CD4-positive, alpha-beta memory T cell (primary cell): ENCODE measurements at regions of chr10 and their contacts with region 1.

Region 1: GRCh38 chr10:93376372-93377293 is 105.5 kb downstream of the MYOF start:
- DNase-seq: peak; percentile 62 to 75 (median 69)
- H3K4me3 ChIP-seq: no peak overlapping the region
- H3K4me3 Mint-ChIP-seq: no peak overlapping the region
- H3K27ac ChIP-seq: no peak overlapping the region
- H3K27ac Mint-ChIP-seq: peak overlapping the region in 1 of 7 donors; percentile 38
- H3K4me1 ChIP-seq: peaks cover 11% of the 10 kb centered on the region
- H3K4me1 Mint-ChIP-seq: peaks cover 9 to 18% (median 9%) of the 10 kb centered on the region in 4 donors
- H3K27me3 ChIP-seq: no peaks in the 10 kb centered on the region
- H3K27me3 Mint-ChIP-seq: peaks cover 0 to 1% of the 10 kb centered on the region in 2 donors

Region 2: DNA sequence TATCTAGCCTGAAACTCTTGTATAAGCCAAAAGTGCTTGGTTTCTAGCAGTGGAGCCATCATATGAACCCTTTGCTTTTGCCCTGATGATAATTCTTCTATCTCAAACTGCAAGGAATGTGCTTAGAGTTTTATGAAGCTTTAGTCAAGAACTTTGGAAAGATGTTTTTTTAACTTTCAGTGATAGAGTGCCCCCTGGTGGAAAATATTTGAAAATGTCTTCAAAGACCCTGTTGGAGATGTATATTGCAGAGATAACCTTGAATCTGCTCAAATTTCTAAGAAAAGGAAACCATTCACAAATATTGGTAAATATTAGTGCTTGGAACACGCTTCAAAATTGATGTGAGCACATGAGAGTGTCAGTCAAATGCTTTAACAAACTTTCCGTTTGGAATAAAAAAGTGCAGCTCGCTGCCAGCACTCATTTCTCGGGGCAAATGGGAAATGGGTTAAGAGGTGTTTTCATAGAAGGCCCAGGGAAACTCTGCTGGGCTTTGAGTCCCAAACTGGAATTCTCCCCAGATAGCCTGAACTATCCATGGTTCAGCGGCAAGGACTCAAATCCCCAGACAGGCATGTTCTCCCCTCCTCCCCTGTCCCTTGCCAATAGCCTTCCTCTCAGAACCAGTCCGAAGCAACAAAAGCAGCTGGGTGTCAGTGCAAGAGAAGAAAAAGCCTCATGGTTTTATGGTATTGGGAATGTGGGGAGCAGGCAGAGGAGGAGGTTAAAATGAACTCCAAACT is 23.8 kb before region 1 on chr10:
- CTCF ChIA-PET with region 1: interaction called, 18 read pairs
- POLR2A ChIA-PET with region 1: no interaction called
- intact Hi-C with region 1: no loop called
- DNase-seq: peak in 4 of 5 donors; percentile 43 to 46 (median 45)
- H3K4me3 ChIP-seq: no peak overlapping the region
- H3K4me3 Mint-ChIP-seq: no peak overlapping the region
- H3K27ac ChIP-seq: no peak overlapping the region
- H3K27ac Mint-ChIP-seq: no peak overlapping the region
- H3K4me1 ChIP-seq: no peaks in the 10 kb centered on the region
- H3K4me1 Mint-ChIP-seq: peaks cover 0 to 3% (median 0%) of the 10 kb centered on the region in 4 donors
- H3K27me3 ChIP-seq: no peaks in the 10 kb centered on the region
- H3K27me3 Mint-ChIP-seq: peaks cover 7 to 10% of the 10 kb centered on the region in 2 donors

Region 3: GRCh38 chr10:93386631-93387369 is 10.2 kb after region 1 on chr10:
- CTCF ChIA-PET with region 1: interaction called, 37 read pairs
- POLR2A ChIA-PET with region 1: no interaction called
- intact Hi-C with region 1: no loop called
- DNase-seq: peak in 3 of 5 donors; percentile 13 to 27 (median 16)
- H3K4me3 ChIP-seq: no peak overlapping the region
- H3K4me3 Mint-ChIP-seq: peak overlapping the region; percentile 15 to 71 (median 63)
- H3K27ac ChIP-seq: no peak overlapping the region
- H3K27ac Mint-ChIP-seq: peak overlapping the region; percentile 6 to 87 (median 50)
- H3K4me1 ChIP-seq: peaks cover 17% of the 10 kb centered on the region
- H3K4me1 Mint-ChIP-seq: peaks cover 14 to 30% (median 17%) of the 10 kb centered on the region in 4 donors
- H3K27me3 ChIP-seq: no peaks in the 10 kb centered on the region
- H3K27me3 Mint-ChIP-seq: peaks cover 1 to 2% of the 10 kb centered on the region in 2 donors

Region 4: DNA sequence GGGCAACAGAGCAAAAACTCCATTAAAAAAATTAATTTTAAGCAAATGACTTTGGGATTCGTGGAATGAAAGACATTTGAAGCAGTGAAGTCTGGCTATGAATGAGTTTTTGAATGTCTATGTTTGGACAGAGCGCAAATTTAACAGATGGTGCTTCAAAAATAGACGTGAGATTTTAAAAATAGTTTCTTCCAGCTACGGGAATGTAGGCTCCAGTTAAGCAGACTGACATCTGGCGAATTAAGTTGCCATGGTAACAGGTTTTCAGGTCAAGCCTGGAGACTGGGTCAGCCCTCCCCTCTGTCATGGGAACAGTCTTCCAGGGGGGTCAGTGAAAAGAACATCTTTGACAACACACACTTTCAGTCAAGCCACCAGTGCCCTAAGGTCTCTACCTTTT is 43.5 kb after region 1 on chr10:
- CTCF ChIA-PET with region 1: interaction called, 70 read pairs
- POLR2A ChIA-PET with region 1: no interaction called
- intact Hi-C with region 1: no loop called
- DNase-seq: no peak
- H3K4me3 ChIP-seq: no peak overlapping the region
- H3K4me3 Mint-ChIP-seq: no peak overlapping the region
- H3K27ac ChIP-seq: no peak overlapping the region
- H3K27ac Mint-ChIP-seq: no peak overlapping the region
- H3K4me1 ChIP-seq: peaks cover 3% of the 10 kb centered on the region
- H3K4me1 Mint-ChIP-seq: peaks cover 10 to 18% (median 11%) of the 10 kb centered on the region in 4 donors
- H3K27me3 ChIP-seq: no peaks in the 10 kb centered on the region
- H3K27me3 Mint-ChIP-seq: no peaks in the 10 kb centered on the region

Region 5: DNA sequence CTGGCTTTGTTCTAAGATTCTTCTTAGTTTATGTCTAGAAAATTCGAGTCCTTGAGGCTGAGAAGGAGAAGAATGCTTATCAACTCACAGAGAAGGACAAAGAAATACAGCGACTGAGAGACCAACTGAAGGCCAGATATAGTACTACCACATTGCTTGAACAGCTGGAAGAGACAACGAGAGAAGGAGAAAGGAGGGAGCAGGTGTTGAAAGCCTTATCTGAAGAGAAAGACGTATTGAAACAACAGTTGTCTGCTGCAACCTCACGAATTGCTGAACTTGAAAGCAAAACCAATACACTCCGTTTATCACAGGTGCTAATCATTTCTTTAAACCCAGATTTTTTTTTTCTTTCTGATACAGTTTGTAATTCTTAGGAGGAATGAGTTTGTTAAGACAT is 126.4 kb after region 1 on chr10:
- CTCF ChIA-PET with region 1: interaction called, 210 read pairs
- POLR2A ChIA-PET with region 1: interaction called, 3 read pairs
- intact Hi-C with region 1: no loop called
- DNase-seq: peak in 1 of 5 donors; percentile 7
- H3K4me3 ChIP-seq: peak overlapping the region in 1 of 2 donors; percentile 43
- H3K4me3 Mint-ChIP-seq: peak overlapping the region; percentile 61 to 86 (median 73)
- H3K27ac ChIP-seq: peak overlapping the region; percentile 31
- H3K27ac Mint-ChIP-seq: peak overlapping the region; percentile 23 to 93 (median 72)
- H3K4me1 ChIP-seq: peaks cover 28% of the 10 kb centered on the region
- H3K4me1 Mint-ChIP-seq: peaks cover 15 to 31% (median 23%) of the 10 kb centered on the region in 4 donors
- H3K27me3 ChIP-seq: no peaks in the 10 kb centered on the region
- H3K27me3 Mint-ChIP-seq: no peaks in the 10 kb centered on the region

Region 6: DNA sequence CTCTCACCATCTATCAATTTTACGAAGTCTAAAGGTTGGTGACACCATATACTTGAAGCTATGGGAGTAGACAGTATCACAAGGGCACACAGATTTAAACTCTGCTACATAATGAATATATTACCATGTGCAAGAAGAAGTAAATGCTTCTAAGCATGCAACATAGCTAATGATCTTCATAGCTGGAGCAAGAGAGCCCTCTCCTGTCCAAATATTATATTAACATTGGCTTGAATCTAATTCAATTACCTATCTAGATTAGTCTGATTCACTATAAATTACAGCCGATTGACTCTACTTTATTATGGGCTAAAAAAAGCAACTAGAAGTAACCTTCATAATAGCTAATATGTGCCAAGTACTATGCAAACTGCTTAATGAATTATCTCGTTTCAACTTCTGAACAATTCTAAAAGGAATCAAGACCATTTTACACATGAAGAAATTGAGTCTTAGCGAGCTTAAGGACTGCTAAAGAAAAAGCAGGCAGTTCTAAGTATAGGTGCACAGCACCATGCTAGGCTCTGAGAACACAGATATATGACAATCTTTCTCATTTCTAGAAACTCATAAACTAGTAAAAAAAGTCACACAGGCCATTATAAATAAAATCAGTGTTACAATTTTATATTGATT is 303.9 kb after region 1 on chr10:
- CTCF ChIA-PET with region 1: interaction called, 5 read pairs
- POLR2A ChIA-PET with region 1: no interaction called
- intact Hi-C with region 1: loop called (anchors 5 kb)
- DNase-seq: peak in 1 of 5 donors; percentile 8
- H3K4me3 ChIP-seq: no peak overlapping the region
- H3K4me3 Mint-ChIP-seq: no peak overlapping the region
- H3K27ac ChIP-seq: no peak overlapping the region
- H3K27ac Mint-ChIP-seq: no peak overlapping the region
- H3K4me1 ChIP-seq: no peaks in the 10 kb centered on the region
- H3K4me1 Mint-ChIP-seq: peaks cover 0 to 1% (median under 1%) of the 10 kb centered on the region in 4 donors
- H3K27me3 ChIP-seq: no peaks in the 10 kb centered on the region
- H3K27me3 Mint-ChIP-seq: no peaks in the 10 kb centered on the region